Calu3 (cell line): ENCODE measurements at regions of chr12 and their contacts with region 1.

Region 1: DNA sequence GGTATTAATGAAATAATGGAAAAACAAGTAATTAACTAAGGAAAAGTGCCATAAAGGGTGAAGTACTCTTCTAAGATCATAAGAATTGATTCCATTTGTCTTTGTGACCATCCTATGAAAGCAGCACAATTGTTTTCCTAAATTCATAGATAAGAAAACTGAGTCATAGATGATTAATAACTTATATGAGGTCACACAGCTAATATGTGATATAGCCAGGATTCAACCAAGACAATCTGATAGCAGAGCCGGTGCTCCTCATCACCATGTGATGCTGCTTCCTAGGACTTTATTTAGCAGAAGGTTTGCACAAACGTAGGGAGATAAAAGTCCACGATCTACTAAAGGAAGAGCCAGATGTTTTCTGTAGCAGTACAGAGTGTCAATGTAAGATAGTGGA is 181.5 kb upstream of the SYT1 start:
- DNase-seq: no peak
- H3K4me3 Mint-ChIP-seq: no peak overlapping the region
- H3K27ac Mint-ChIP-seq: no peak overlapping the region
- H3K4me1 Mint-ChIP-seq: no peaks in the 10 kb centered on the region
- H3K27me3 Mint-ChIP-seq: no peaks in the 10 kb centered on the region
- CTCF ChIP-seq: no peak

Region 2: DNA sequence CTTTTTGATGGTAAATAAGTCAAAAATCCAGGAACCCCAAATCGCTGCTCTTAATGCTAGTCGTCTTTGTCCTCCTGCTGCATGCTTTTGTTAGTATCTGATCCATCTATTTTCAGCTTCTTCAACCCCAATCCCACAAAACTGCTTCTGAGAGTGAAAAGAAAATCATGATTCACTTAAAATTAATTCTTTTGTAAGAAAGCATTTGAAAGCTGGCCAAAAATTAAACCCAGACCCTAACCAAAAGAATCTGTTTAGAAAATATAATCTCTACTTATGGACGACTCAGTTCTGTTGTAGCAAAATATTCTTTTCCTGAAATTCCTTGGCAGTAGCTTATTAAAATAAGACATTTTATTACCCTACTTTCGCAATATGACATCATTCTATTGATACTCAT is 262.0 kb before region 1 on chr12:
- CTCF ChIA-PET with region 1: no interaction called
- intact Hi-C with region 1: no loop called
- DNase-seq: no peak
- H3K4me3 Mint-ChIP-seq: no peak overlapping the region
- H3K27ac Mint-ChIP-seq: no peak overlapping the region
- H3K4me1 Mint-ChIP-seq: no peaks in the 10 kb centered on the region
- H3K27me3 Mint-ChIP-seq: no peaks in the 10 kb centered on the region
- CTCF ChIP-seq: no peak

Region 3: DNA sequence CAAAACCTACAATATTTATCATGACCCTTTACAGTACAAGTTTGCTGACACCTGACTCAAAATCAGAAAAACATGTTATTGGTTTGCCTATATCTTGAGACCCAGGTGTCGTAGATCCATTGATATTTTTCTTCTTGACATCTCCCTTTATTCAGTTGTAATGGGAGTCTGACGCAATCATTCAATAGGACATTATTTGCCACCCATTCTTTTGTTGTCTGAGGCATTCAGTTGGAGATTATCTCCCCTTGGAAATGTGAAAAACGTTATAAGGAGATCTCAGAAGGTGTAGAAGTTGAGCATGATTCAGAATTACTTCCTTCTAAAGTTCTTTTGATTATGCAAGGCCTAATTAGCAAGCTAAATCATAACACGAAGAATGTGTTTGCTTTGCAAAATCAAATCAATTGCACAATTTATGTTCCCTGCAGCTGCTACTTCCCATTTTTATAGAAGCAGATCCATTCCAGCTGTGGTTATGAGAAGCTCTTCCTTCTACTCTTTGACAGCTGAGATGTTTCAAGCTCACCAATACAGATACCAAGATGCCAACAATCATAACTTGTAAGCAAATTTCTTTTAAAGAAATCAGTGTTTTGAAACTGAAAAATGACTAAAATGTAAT is 46.7 kb before region 1 on chr12:
- CTCF ChIA-PET with region 1: no interaction called
- intact Hi-C with region 1: loop called (anchors 2 kb)
- DNase-seq: no peak
- H3K4me3 Mint-ChIP-seq: no peak overlapping the region
- H3K27ac Mint-ChIP-seq: no peak overlapping the region
- H3K4me1 Mint-ChIP-seq: no peaks in the 10 kb centered on the region
- H3K27me3 Mint-ChIP-seq: no peaks in the 10 kb centered on the region
- CTCF ChIP-seq: no peak

Region 4: GRCh38 chr12:78703820-78704525 is 20.9 kb after region 1 on chr12:
- CTCF ChIA-PET with region 1: interaction called, 10 read pairs
- intact Hi-C with region 1: no loop called
- DNase-seq: no peak
- H3K4me3 Mint-ChIP-seq: peak overlapping the region; percentile 10
- H3K27ac Mint-ChIP-seq: peak overlapping the region; percentile 34
- H3K4me1 Mint-ChIP-seq: peaks cover 9% of the 10 kb centered on the region
- H3K27me3 Mint-ChIP-seq: no peaks in the 10 kb centered on the region
- CTCF ChIP-seq: no peak

Region 5: DNA sequence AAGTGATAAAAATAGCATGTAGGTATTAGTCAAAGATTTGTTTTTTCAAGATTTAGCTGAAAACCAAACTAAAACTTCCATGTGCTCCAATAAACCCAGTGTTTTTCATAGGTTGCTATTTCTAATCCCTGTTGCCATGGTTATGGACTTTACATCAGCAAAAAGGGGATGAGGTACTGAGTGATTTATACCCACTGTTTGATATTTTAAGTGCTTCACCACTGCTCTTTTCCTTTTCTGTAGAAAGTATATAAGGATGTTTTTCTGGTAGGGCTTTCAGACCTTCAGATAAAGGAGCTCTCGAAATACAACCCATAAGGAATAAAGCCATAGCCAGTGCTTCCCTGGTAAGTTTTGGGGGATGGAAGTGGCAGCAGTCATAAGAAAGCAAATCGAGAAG is 1416.2 kb after region 1 on chr12 and contains the start of gene OTOGL:
- CTCF ChIA-PET with region 1: no interaction called
- intact Hi-C with region 1: no loop called
- DNase-seq: no peak
- H3K4me3 Mint-ChIP-seq: no peak within 1 kb of the TSS
- H3K27ac Mint-ChIP-seq: no peak within 1 kb of the TSS
- H3K4me1 Mint-ChIP-seq: no peaks in the 10 kb centered on the region
- H3K27me3 Mint-ChIP-seq: no peaks in the 10 kb centered on the region
- CTCF ChIP-seq: no peak
- total RNA-seq, gene OTOGL: 0.05 and 0.09 TPM in 2 replicates